ENCODE measurements at regions of chr2 and their contacts with region 1.

Region 1: DNA sequence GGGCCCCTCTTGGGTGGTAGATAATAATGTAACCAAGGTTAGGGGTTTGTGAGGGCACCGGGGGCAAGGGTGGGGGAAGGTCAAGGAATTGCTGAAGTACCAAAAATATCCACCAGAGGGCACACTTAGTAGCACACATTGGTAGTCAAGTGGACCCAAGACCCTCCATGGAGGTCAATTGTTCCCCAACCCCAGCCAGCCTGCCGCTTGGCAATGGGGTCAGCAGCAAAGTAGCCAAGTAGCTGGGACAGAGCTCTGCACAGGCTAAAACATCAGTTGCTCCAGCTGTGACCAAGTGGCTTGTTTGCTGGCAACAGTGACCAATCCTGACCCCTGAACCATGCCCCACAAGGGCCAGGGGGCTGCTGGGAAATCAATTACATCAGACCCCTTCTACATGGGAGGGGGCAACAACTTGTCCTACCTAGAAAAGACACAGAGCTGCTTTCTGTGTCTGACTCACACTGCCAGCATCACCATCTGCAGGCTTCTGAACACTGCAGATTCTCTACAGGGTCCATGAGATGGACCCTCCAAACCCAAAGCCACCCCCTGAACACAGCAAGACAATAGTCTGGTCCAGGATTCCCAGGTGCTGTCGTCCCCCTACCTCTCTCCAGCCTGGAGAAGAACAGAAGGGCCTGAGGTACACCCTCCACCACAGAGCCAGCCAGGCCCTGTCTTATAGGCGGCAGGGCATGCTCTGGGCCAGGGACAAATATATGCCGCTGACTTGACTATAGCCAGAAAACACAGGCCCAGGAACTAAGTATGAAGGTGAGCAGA is 76.0 kb downstream of the EMX1 start:
- DNase-seq: peak in 1 of 2 donors; percentile 44
- ATAC-seq: peak; percentile 43 to 75 (median 58)
- H3K4me3 ChIP-seq: no peak overlapping the region
- H3K27ac ChIP-seq: no peak overlapping the region
- H3K4me1 ChIP-seq: no peaks in the 10 kb centered on the region
- H3K27me3 ChIP-seq: no peaks in the 10 kb centered on the region
- CTCF ChIP-seq: peak; percentile 77

Region 2: DNA sequence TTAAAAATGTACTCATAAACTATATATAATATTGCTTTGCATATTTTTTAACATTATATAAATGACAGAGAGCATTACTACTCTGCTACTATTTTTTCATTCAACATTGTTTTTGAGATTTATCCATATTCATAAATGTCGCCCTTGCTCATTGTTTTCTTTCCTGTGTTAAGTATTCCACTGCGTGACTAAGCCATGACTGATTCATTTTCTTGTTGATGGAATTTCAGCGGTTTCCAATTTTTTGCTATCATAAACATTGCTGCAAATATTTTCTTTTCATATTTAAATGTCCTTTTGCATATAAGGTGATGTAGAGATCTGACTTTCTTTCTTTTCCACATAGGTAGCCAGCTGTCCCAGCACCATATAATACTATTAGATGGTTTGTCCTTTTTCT is 20.6 kb after region 1 on chr2:
- intact Hi-C with region 1: no loop called
- DNase-seq: no peak
- ATAC-seq: no peak
- H3K4me3 ChIP-seq: no peak overlapping the region
- H3K27ac ChIP-seq: no peak overlapping the region
- H3K4me1 ChIP-seq: no peaks in the 10 kb centered on the region
- H3K27me3 ChIP-seq: no peaks in the 10 kb centered on the region
- CTCF ChIP-seq: no peak

Region 3: GRCh38 chr2:73176881-73177644 is 183.7 kb after region 1 on chr2:
- intact Hi-C with region 1: loop called in 1 of 2 experiments (anchors 2 kb)
- DNase-seq: peak; percentile 93 to 95
- ATAC-seq: peak; percentile 94 to 99 (median 97)
- H3K4me3 ChIP-seq: peak overlapping the region; percentile 75
- H3K27ac ChIP-seq: peak overlapping the region; percentile 69
- H3K4me1 ChIP-seq: peaks cover 13% of the 10 kb centered on the region
- H3K27me3 ChIP-seq: peaks cover 0 to 46% (median 8%) of the 10 kb centered on the region in 3 donors
- CTCF ChIP-seq: peak; percentile 99

Region 4: GRCh38 chr2:73418343-73418742 is 425.0 kb after region 1 on chr2:
- intact Hi-C with region 1: no loop called
- DNase-seq: peak; percentile 73 to 83
- ATAC-seq: peak; percentile 51 to 88 (median 72)
- H3K4me3 ChIP-seq: no peak overlapping the region
- H3K27ac ChIP-seq: no peak overlapping the region
- H3K4me1 ChIP-seq: peaks cover 5% of the 10 kb centered on the region
- H3K27me3 ChIP-seq: no peaks in the 10 kb centered on the region
- CTCF ChIP-seq: no peak

Region 5: DNA sequence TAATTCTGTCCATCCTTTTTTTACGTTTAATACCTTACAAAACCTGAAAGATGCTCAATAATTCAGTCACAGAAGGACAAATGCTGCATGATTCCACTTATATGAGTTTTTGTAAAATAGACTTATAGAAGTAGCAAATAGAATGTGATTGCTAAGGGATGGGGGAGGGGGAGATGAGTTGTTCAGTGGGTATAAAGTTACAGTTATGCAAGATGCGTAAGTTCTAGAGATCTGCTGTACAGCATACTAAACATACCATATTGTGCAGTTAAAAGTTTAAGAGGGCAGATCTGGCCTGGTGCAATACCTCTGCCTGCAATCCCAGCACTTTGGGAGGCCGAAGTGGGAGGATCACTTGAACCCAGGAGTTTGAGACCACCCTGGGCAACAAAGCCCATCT is 1070.1 kb after region 1 on chr2:
- intact Hi-C with region 1: no loop called
- DNase-seq: no peak
- ATAC-seq: no peak
- H3K4me3 ChIP-seq: no peak overlapping the region
- H3K27ac ChIP-seq: no peak overlapping the region
- H3K4me1 ChIP-seq: no peaks in the 10 kb centered on the region
- H3K27me3 ChIP-seq: no peaks in the 10 kb centered on the region
- CTCF ChIP-seq: no peak

Measured in psoas muscle (tissue), 8 donors.